Ascending aorta (tissue), 2 donors: ENCODE measurements at regions of chr9 and their contacts with region 1.

Region 1: DNA sequence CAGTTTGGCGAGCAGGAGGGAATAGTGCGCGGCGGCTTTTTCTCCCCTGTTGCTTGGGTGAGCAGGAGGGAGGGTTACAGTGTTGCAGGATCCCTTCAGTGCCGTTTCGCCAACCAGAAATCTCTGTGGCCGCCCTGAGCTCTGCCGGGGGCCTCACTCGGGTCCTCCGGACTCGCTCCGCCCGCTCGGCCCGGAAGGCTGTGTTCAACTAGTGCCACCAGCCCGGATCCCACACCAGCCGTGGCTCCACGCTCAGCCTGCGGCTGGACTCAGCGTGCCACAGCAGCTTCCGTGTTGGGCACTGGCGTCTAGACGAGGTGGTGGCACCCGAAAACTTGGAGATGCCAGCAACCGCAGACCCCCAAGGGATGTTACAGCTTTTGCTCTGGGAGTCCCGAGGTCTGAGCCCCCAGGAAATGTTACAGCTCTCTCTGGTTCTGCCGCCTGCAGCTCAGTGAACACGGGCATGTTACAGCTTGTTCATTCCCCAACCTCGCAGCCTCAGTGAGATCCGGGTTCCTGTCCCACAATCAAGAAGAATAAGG is 16.0 kb upstream of the OR13C9 start:
- DNase-seq: no peak
- H3K4me3 ChIP-seq: no peak overlapping the region
- H3K27ac ChIP-seq: no peak overlapping the region
- H3K4me1 ChIP-seq: no peaks in the 10 kb centered on the region
- H3K27me3 ChIP-seq: no peaks in the 10 kb centered on the region
- CTCF ChIP-seq: no peak

Region 2: GRCh38 chr9:104209387-104209786 is 424.7 kb before region 1 on chr9:
- intact Hi-C with region 1: no loop called
- DNase-seq: no peak
- H3K4me3 ChIP-seq: no peak overlapping the region
- H3K27ac ChIP-seq: no peak overlapping the region
- H3K4me1 ChIP-seq: no peaks in the 10 kb centered on the region
- H3K27me3 ChIP-seq: no peaks in the 10 kb centered on the region
- CTCF ChIP-seq: no peak

Region 3: GRCh38 chr9:104286799-104287198 is 347.2 kb before region 1 on chr9:
- intact Hi-C with region 1: no loop called
- DNase-seq: no peak
- H3K4me3 ChIP-seq: no peak overlapping the region
- H3K27ac ChIP-seq: no peak overlapping the region
- H3K4me1 ChIP-seq: no peaks in the 10 kb centered on the region
- H3K27me3 ChIP-seq: no peaks in the 10 kb centered on the region
- CTCF ChIP-seq: no peak

Region 4: DNA sequence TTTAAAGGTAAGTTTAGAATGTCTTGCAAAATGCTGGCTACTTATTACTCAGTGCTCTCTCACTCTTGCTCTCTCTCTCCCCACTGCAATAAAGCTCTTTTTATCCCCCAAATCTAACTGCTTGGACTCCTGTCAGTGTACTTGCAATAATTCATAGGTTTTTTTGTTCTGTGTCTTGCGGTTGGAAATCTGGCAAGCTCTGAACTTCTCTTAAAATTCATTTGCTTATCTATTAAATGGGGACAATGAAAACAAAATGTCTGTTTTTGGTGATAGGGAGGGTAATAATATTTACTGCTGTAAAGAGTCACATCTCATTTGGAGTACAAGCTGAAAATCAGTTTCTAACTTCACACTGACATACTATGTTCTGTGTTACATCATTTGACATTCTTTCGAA is 41.6 kb after region 1 on chr9:
- intact Hi-C with region 1: loop called (anchors 10 kb)
- DNase-seq: no peak
- H3K4me3 ChIP-seq: no peak overlapping the region
- H3K27ac ChIP-seq: no peak overlapping the region
- H3K4me1 ChIP-seq: no peaks in the 10 kb centered on the region
- H3K27me3 ChIP-seq: no peaks in the 10 kb centered on the region
- CTCF ChIP-seq: no peak

Region 5: GRCh38 chr9:104700306-104701028 is 66.4 kb after region 1 on chr9:
- intact Hi-C with region 1: no loop called
- DNase-seq: no peak
- H3K4me3 ChIP-seq: no peak overlapping the region
- H3K27ac ChIP-seq: no peak overlapping the region
- H3K4me1 ChIP-seq: no peaks in the 10 kb centered on the region
- H3K27me3 ChIP-seq: no peaks in the 10 kb centered on the region
- CTCF ChIP-seq: no peak